ENCODE measurements at regions of chr19 and their contacts with region 1.

Region 1: GRCh38 chr19:4065430-4066175 is 1.1 kb downstream of the ZBTB7A start:
- DNase-seq: peak; percentile 100
- ATAC-seq: peak; percentile 62
- H3K4me3 Mint-ChIP-seq: peak overlapping the region; percentile 61
- H3K27ac Mint-ChIP-seq: peak overlapping the region; percentile 54
- H3K4me1 Mint-ChIP-seq: peaks cover 22% of the 10 kb centered on the region
- H3K27me3 Mint-ChIP-seq: no peaks in the 10 kb centered on the region

Region 2: GRCh38 chr19:4083677-4084546 is 18.3 kb after region 1 on chr19:
- POLR2A ChIA-PET with region 1: interaction called, 58 read pairs
- DNase-seq: peak; percentile 74
- ATAC-seq: peak; percentile 59
- H3K4me3 Mint-ChIP-seq: peak overlapping the region; percentile 79
- H3K27ac Mint-ChIP-seq: peak overlapping the region; percentile 89
- H3K4me1 Mint-ChIP-seq: peaks cover 45% of the 10 kb centered on the region
- H3K27me3 Mint-ChIP-seq: no peaks in the 10 kb centered on the region

Region 3: GRCh38 chr19:4103073-4103418 is 37.4 kb after region 1 on chr19:
- POLR2A ChIA-PET with region 1: interaction called, 29 read pairs
- DNase-seq: no peak
- ATAC-seq: no peak
- H3K4me3 Mint-ChIP-seq: no peak overlapping the region
- H3K27ac Mint-ChIP-seq: peak overlapping the region; percentile 21
- H3K4me1 Mint-ChIP-seq: peaks cover 32% of the 10 kb centered on the region
- H3K27me3 Mint-ChIP-seq: no peaks in the 10 kb centered on the region

Region 4: DNA sequence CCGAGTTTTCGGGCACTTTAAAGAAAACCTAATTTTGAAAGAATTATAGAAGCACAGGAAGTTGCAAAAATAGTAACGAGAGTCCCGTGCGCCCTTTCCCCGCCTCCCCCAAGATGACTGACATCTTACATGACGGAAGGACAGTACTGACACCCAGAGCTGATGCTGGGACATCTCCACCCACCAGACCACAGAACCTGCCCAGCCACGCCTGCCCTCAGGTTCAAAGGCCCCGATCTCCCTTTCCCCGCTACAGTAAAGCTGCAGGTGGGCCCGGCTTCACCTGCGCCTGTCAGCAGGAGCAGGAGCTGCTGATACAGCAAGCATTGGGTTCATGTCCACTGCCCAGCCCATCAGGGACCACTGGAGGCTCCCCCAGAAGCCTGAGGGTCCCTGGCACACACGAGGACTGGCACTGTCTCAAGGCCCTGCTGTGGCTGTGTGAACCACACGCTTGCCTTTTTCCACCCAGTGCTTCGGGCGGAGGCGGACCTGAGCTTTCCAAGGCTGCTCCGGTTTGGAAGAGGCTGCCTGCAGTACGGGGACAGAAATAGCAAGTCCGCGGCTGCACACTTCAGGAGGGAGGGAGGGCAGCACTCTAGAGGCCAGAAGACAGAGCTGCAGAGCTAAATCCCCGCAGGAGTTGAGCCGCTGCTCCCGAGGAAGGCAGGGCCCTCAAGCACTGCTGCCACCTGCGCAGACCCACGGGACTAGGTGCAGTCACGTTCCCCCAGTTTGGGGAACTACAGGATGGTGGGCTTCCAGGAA is 49.6 kb after region 1 on chr19:
- POLR2A ChIA-PET with region 1: interaction called, 14 read pairs
- DNase-seq: peak; percentile 72
- ATAC-seq: peak; percentile 99
- H3K4me3 Mint-ChIP-seq: peak overlapping the region; percentile 79
- H3K27ac Mint-ChIP-seq: peak overlapping the region; percentile 89
- H3K4me1 Mint-ChIP-seq: peaks cover 37% of the 10 kb centered on the region
- H3K27me3 Mint-ChIP-seq: no peaks in the 10 kb centered on the region